ENCODE measurements at regions of chr17 and their contacts with region 1.

Region 1: DNA sequence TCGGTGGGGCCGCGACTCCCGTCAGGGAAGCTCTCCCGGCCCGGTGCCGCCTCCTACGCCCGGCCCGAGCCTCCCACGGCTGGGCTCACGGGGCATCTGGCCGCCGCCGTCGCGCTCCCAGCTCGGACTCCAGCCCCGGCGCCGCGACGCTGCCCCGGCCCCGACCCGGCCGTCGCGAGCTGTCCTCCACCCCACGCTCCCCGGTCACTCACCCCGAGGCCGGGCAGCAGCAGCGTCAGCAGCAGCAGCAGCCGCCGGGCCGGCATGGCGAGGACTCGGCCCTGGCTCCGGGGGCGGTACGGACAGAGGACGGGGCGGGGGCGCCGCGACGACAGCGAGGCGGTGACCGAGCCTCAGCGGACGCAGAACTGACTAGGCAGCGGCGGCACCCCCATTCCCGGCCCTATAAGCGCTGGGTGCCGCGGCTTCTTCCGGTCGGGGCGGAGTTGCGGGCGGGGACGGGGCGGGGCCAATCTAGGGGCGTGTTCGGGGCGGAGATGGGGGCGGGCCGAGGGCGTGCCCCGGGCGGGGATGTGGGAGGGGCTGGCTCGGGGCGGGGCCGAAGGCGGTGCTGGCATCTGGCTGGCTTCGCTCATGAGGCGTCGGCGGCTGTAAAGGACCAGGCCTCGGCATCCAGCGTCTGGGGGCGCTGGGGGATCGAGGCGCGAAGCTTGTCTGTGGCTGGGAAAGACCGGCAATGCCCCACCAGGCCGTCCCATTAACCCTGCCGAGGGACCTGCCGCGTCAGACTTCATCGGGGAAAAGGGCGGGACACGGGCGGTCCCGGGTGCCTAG is at the start of gene ERN1:
- DNase-seq: peak; percentile 91
- ATAC-seq: peak; percentile 93
- H3K4me3 Mint-ChIP-seq: peak within 1 kb of the TSS; percentile 88
- H3K27ac Mint-ChIP-seq: peak within 1 kb of the TSS; percentile 89
- H3K4me1 Mint-ChIP-seq: peaks cover 17% of the 10 kb centered on the region
- H3K27me3 Mint-ChIP-seq: peaks cover 3% of the 10 kb centered on the region
- total RNA-seq, gene ERN1: 38.6 to 45.3 TPM

Region 2: GRCh38 chr17:64025732-64026294 is 104.1 kb before region 1 on chr17:
- POLR2A ChIA-PET with region 1: interaction called, 25 read pairs
- DNase-seq: peak; percentile 87
- ATAC-seq: peak; percentile 91
- H3K4me3 Mint-ChIP-seq: peak overlapping the region; percentile 78
- H3K27ac Mint-ChIP-seq: peak overlapping the region; percentile 85
- H3K4me1 Mint-ChIP-seq: peaks cover 45% of the 10 kb centered on the region
- H3K27me3 Mint-ChIP-seq: no peaks in the 10 kb centered on the region

Region 3: DNA sequence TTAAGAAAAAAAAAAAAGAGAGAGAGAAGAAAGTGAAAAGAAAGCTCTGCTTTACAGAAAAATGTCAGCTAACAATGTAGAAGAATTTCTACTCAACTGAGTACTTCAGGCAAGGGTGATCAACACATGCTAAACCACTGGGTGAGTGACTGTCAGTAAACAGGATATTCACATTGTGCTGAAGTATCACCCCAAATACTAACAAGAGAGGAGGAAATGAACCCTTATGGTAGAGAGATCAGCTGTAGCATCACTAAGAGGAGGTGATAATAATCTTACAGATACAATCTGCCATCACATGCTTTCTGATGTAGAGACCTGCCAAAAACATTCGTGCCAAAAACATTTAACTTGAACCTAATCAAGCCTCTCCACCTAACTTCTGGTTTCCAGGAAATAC is 78.8 kb before region 1 on chr17:
- POLR2A ChIA-PET with region 1: interaction called, 12 read pairs
- DNase-seq: no peak
- ATAC-seq: peak; percentile 99
- H3K4me3 Mint-ChIP-seq: peak overlapping the region; percentile 4
- H3K27ac Mint-ChIP-seq: peak overlapping the region; percentile 81
- H3K4me1 Mint-ChIP-seq: peaks cover 21% of the 10 kb centered on the region
- H3K27me3 Mint-ChIP-seq: no peaks in the 10 kb centered on the region

Region 4: GRCh38 chr17:64145757-64146417 is 15.9 kb after region 1 on chr17:
- POLR2A ChIA-PET with region 1: interaction called, 54 read pairs
- DNase-seq: peak; percentile 86
- ATAC-seq: peak; percentile 97
- H3K4me3 Mint-ChIP-seq: no peak overlapping the region
- H3K27ac Mint-ChIP-seq: no peak overlapping the region
- H3K4me1 Mint-ChIP-seq: peaks cover 25% of the 10 kb centered on the region
- H3K27me3 Mint-ChIP-seq: no peaks in the 10 kb centered on the region

Measured in activated naive CD8-positive, alpha-beta T cell treated with anti-CD3 and anti-CD28 coated beads, Interleukin-2, amount 10 ng/mL, durations not matched to agents 7 days and 5 days (primary cell).